Caco-2 (cell line): ENCODE measurements at regions of chr4 and their contacts with region 1.

Region 1: DNA sequence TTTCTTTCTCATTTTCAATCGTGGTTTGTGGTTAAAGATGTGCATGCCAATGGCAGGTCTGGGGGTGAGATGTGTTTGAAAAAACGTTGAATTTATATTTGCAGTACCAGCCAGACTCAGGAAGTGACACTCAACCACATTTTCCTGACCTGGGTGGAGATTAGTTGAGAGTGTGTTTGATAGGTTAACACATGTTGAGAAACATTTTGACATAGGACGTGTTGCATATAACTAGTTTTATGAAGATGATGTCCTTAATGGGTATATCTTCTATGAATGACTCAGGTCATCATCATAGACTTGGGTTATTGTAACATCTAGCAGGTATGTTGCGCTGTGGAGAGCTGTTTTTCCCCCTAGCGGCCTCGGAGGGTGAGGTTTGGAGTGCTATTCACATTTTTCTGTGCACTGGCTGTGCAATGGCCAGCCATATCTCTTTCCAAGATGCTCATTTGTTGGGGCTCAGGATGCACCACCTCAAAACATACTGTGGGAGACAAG is 21.7 kb upstream of the CD38 start:
- DNase-seq: peak in 1 of 2 experiments; percentile 25
- H3K4me3 ChIP-seq: no peak overlapping the region
- H3K4me3 Mint-ChIP-seq: no peak overlapping the region
- H3K27ac Mint-ChIP-seq: no peak overlapping the region
- H3K4me1 ChIP-seq: no peaks in the 10 kb centered on the region
- H3K4me1 Mint-ChIP-seq: no peaks in the 10 kb centered on the region
- H3K27me3 ChIP-seq: no peaks in the 10 kb centered on the region
- H3K27me3 Mint-ChIP-seq: peaks cover 5% of the 10 kb centered on the region
- CTCF ChIP-seq: peak in 1 of 2 experiments; percentile 17

Region 2: DNA sequence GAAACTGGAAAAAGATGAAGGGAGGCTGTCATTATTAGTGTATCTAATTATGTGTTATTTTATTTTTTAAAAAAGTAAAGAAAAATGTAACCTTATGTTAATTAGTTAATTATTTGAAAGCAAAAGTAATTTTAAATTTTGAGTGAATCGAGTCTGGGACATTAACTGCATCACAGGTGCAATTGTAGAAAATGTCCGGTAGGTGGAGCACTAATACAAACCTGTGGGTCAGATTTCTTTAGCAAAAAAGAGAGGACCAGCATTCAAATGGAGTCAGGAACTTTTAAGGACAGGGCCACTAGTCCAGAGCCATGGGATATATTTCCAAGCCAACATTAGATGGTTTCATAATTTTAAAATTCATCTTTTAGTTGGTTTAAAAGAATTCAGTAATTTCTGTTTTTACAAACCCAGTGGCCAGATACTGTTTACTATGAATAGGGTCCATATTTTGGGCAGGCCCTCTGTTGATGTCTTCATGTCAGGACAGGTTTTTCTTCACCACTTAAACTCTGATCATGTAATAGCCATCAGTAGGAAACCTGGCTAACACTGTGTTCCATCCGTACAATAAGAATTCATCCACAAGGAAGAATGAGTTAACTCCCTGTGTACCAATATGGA is 26.4 kb before region 1 on chr4:
- CTCF ChIA-PET with region 1: no interaction called
- POLR2A ChIA-PET with region 1: no interaction called
- intact Hi-C with region 1: loop called (anchors 2 kb)
- DNase-seq: peak in 1 of 2 experiments; percentile 38
- H3K4me3 ChIP-seq: no peak overlapping the region
- H3K4me3 Mint-ChIP-seq: no peak overlapping the region
- H3K27ac Mint-ChIP-seq: no peak overlapping the region
- H3K4me1 ChIP-seq: no peaks in the 10 kb centered on the region
- H3K4me1 Mint-ChIP-seq: no peaks in the 10 kb centered on the region
- H3K27me3 ChIP-seq: no peaks in the 10 kb centered on the region
- H3K27me3 Mint-ChIP-seq: peaks cover 3% of the 10 kb centered on the region
- CTCF ChIP-seq: peak; percentile 66 to 67